ENCODE measurements at regions of chr6 and their contacts with region 1.

Region 1: DNA sequence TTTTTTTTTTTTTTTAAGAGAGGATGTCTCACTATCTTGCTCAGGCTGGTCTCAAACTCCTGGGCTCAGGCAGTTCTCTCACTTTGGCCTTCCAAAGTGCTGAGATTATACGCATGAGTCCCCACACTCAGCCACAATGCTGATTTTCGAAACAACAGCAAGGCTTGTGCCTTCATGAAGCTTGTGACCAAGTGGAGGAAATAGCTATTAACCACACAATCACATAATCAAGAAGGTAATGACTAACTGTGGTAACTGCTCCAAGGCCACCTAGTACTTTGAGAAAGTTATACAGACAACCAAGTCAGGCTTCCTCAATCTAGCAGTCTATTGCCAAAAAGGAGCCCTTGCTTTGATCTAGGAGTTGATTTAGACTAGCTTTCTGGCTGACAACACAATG is 46.3 kb downstream of the SOD2 start:
- DNase-seq: no peak
- ATAC-seq: peak; percentile 42
- H3K4me3 ChIP-seq: no peak overlapping the region
- H3K27ac ChIP-seq: no peak overlapping the region
- H3K4me1 ChIP-seq: no peaks in the 10 kb centered on the region
- H3K27me3 ChIP-seq: no peaks in the 10 kb centered on the region
- CTCF ChIP-seq: no peak

Region 2: DNA sequence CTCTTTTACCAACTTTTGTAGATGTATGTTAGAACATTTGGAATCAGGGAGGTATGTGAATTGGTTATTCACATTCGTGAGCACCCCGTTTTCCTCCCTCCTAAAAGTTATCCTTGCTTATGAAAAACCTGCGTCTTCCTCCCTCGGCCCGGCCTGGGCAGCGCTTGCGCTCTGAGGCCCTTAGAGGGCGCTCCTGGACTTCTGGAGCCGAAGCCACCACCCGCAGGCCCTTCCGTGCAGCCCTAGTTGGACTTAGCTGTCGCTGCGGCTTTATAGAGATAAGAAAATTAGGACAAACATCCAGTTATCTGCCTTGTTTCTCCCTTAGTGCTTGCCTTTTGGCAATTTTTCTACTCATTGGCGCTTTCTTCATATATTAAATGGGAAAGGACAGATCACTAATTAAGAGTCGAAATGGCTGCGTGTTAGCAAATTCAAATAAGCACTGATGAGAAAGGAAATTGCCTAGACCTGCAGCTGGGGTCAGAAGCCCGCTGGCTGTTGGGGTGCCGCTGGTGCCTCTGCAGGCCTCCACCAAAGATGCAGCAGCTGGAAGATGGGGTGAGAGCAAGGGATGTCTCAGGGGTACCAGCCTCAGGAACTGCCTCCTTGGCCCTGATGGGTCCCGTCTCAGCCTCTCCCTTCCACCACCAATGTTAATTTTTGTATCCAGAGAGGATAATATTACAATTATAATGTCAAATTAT is 472.3 kb before region 1 on chr6:
- intact Hi-C with region 1: loop called (anchors 10 kb)
- DNase-seq: peak; percentile 87
- ATAC-seq: peak; percentile 94
- H3K4me3 ChIP-seq: no peak overlapping the region
- H3K27ac ChIP-seq: no peak overlapping the region
- H3K4me1 ChIP-seq: peaks cover 16% of the 10 kb centered on the region
- H3K27me3 ChIP-seq: peaks cover 45% of the 10 kb centered on the region
- CTCF ChIP-seq: peak; percentile 95

Region 3: GRCh38 chr6:159414711-159415110 is 232.0 kb before region 1 on chr6:
- intact Hi-C with region 1: no loop called
- DNase-seq: no peak
- ATAC-seq: no peak
- H3K4me3 ChIP-seq: no peak overlapping the region
- H3K27ac ChIP-seq: no peak overlapping the region
- H3K4me1 ChIP-seq: no peaks in the 10 kb centered on the region
- H3K27me3 ChIP-seq: no peaks in the 10 kb centered on the region
- CTCF ChIP-seq: no peak

Region 4: DNA sequence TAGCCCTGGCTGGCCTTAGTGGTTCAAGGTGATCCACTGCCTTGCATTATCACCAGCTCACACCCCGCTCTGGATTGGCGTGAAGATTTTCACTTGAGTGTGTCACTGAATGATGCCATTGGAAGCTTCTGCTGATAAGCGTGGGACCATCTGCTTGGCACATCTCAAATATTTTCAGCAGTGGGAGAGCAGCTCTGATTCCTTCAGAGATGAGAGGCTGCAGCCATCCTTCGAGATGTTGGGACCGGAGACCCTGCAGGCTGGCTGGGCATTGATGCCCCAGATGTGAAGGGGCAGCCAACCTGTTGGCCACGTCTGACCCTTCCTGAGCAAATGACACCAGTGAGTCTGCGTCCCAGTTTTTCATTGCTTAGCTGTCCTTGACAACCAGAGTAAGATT is 244.1 kb after region 1 on chr6 and contains the start of gene MAS1:
- intact Hi-C with region 1: no loop called
- DNase-seq: no peak
- ATAC-seq: no peak
- H3K4me3 ChIP-seq: no peak within 1 kb of the TSS
- H3K27ac ChIP-seq: no peak within 1 kb of the TSS
- H3K4me1 ChIP-seq: no peaks in the 10 kb centered on the region
- H3K27me3 ChIP-seq: peaks cover 9% of the 10 kb centered on the region
- CTCF ChIP-seq: no peak
- total RNA-seq, gene MAS1: not detected

Region 5: GRCh38 chr6:160088069-160088783 is 441.5 kb after region 1 on chr6:
- intact Hi-C with region 1: no loop called
- DNase-seq: no peak
- ATAC-seq: peak; percentile 39
- H3K4me3 ChIP-seq: no peak overlapping the region
- H3K27ac ChIP-seq: no peak overlapping the region
- H3K4me1 ChIP-seq: no peaks in the 10 kb centered on the region
- H3K27me3 ChIP-seq: no peaks in the 10 kb centered on the region
- CTCF ChIP-seq: peak; percentile 53

Measured in upper lobe of right lung (tissue), 1 donor.